ENCODE measurements at regions of chr19 and their contacts with region 1.

Region 1: DNA sequence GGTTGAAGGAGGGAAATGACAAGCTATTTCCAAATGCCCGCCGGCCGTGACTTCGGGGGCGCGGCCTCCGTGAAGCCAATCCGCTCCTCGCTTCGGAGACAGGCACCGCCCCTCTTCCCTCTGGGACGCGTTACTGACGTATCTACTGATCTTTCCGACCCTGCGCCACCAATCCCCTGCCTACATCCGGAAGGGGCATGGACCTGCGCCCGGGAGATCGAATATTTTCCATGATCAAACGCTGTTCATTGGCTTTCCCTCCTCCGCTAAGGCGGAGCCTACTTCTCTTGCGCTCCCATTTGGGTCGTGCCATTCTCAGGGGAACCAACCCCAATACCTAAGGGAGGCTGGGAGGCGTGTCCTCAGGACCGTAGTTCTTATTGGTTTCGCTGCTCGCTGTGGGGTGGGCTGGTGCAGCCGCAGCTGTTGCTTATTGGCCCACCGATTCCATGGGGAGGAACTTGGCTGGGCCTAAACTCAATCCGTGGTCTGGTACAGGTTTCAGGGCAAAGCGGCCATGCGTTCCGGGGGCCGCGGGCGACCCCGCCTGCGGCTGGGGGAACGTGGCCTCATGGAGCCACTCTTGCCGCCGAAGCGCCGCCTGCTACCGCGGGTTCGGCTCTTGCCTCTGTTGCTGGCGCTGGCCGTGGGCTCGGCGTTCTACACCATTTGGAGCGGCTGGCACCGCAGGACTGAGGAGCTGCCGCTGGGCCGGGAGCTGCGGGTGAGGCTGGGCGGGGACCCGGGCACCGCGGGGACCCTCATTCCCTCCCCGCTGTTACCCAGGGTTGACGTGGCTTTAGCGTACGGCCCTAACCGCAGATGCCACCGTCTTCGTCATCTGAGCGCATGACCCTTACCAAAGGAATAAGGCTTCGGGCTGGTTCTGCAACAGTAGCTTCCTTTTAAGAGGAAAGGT is at the start of gene QPCTL:
- DNase-seq: peak; percentile 98 to 99 (median 98)
- H3K4me3 ChIP-seq: peak within 1 kb of the TSS; percentile 70 to 94
- H3K4me3 Mint-ChIP-seq: peak within 1 kb of the TSS; percentile 90 to 100 (median 94)
- H3K27ac ChIP-seq: peak within 1 kb of the TSS; percentile 88
- H3K27ac Mint-ChIP-seq: peak within 1 kb of the TSS; percentile 91 to 100 (median 97)
- H3K4me1 ChIP-seq: peaks cover 17% of the 10 kb centered on the region
- H3K4me1 Mint-ChIP-seq: peaks cover 11 to 35% (median 17%) of the 10 kb centered on the region in 4 donors
- H3K27me3 ChIP-seq: no peaks in the 10 kb centered on the region
- H3K27me3 Mint-ChIP-seq: no peaks in the 10 kb centered on the region
- total RNA-seq, gene QPCTL: 10.8 to 11.4 TPM

Region 2: DNA sequence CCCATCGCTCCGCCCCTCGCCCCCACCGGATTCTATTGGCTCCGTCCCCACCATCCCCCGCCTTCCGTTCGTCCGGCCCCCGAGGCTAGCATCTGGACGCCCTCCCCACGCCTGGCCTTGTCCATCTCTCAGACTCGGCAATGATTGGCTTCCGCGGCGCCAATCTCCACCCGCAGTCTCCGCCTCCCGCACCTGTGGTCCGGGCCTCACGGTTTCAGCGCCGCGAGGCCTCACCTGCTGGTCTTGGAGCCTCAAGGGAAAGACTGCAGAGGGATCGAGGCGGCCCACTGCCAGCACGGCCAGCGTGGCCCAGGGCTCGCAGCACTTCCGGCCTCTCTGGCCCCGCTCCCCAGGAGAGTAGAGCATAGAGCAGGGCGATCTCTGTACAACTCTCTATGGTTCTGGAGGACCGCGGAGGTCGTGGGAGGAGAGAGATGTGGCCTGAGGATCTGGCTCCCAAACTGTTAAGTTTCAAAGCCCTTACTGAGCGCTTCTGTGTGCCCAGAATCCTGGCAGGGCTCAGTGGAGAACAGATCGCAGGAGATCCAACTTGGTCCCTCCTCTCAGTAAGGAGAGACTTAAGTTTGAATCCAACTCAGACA is 268.8 kb before region 1 on chr19 and contains the start of gene ERCC1:
- CTCF ChIA-PET with region 1: no interaction called
- POLR2A ChIA-PET with region 1: no interaction called
- intact Hi-C with region 1: loop called (anchors 10 kb)
- DNase-seq: peak in 4 of 5 donors; percentile 67 to 87 (median 71)
- H3K4me3 ChIP-seq: peak within 1 kb of the TSS; percentile 54 to 74
- H3K4me3 Mint-ChIP-seq: peak within 1 kb of the TSS; percentile 91 to 97 (median 94)
- H3K27ac ChIP-seq: peak within 1 kb of the TSS; percentile 68
- H3K27ac Mint-ChIP-seq: peak within 1 kb of the TSS; percentile 89 to 97 (median 94)
- H3K4me1 ChIP-seq: peaks cover 36% of the 10 kb centered on the region
- H3K4me1 Mint-ChIP-seq: peaks cover 28 to 58% (median 41%) of the 10 kb centered on the region in 4 donors
- H3K27me3 ChIP-seq: no peaks in the 10 kb centered on the region
- H3K27me3 Mint-ChIP-seq: peaks cover 0 to 2% of the 10 kb centered on the region in 2 donors
- total RNA-seq, gene ERCC1: 46.6 to 46.9 TPM

Region 3: DNA sequence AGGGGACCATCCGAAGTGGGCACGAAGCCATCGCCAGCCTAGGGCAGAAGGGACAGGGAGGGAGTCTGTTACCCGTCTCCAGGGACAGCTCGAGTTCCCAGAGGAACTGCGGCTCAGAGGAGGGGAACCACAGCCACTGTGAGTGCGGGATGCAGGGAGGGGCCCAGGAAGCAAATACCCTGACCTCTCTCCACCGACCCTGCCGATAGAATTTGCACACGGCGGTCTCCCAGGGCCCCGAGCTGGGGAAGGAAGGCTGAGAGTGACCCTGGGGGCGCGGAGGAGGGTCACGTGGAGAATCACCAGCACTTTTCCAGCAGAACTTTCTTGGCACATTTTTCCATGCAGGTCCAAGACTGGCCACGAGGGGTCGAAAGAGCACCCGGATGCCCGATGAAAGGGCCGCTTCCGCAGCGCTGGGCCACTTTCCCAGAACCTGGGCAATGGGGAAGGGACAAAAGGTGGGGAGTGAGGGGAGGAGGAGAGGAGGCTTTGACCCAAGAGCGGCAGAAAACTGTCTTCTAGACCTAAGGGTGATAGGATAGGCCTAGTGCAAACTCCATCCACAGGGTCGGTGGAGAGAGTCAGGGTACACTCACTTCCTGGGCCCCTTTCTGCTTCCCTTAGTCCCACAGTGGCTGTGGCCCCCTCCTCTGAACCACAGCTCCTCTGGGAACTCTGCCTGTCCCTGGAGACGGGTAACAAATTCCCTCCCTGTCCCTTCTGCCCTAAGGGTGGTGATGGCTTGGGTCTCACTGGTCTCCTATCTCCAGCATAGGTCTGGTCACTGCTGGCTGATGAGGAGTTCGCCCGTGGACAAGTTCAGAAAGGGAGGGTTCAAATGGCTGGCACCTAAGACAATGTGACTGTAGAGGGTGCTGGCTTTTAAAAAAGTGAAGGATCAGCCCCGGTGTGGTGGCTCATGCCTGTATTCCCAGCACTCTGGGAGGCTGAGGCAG is 85.1 kb before region 1 on chr19:
- CTCF ChIA-PET with region 1: no interaction called
- POLR2A ChIA-PET with region 1: no interaction called
- intact Hi-C with region 1: no loop called
- DNase-seq: peak in 4 of 5 donors; percentile 14 to 36 (median 20)
- H3K4me3 ChIP-seq: no peak overlapping the region
- H3K4me3 Mint-ChIP-seq: peak overlapping the region in 3 of 8 donors; percentile 44 to 65 (median 54)
- H3K27ac ChIP-seq: no peak overlapping the region
- H3K27ac Mint-ChIP-seq: peak overlapping the region in 4 of 7 donors; percentile 4 to 89 (median 42)
- H3K4me1 ChIP-seq: peaks cover 9% of the 10 kb centered on the region
- H3K4me1 Mint-ChIP-seq: peaks cover 5 to 11% (median 8%) of the 10 kb centered on the region in 4 donors
- H3K27me3 ChIP-seq: peaks cover 2% of the 10 kb centered on the region
- H3K27me3 Mint-ChIP-seq: peaks cover 7 to 9% of the 10 kb centered on the region in 2 donors

Region 4: GRCh38 chr19:45730389-45731288 is 38.2 kb after region 1 on chr19 and contains the start of gene FBXO46:
- CTCF ChIA-PET with region 1: interaction called, 14 read pairs
- POLR2A ChIA-PET with region 1: interaction called, 11 read pairs
- intact Hi-C with region 1: loop called (anchors 1 kb)
- DNase-seq: peak; percentile 90 to 97 (median 92)
- H3K4me3 ChIP-seq: peak within 1 kb of the TSS; percentile 68 to 97
- H3K4me3 Mint-ChIP-seq: peak within 1 kb of the TSS; percentile 89 to 100 (median 93)
- H3K27ac ChIP-seq: peak within 1 kb of the TSS; percentile 89
- H3K27ac Mint-ChIP-seq: peak within 1 kb of the TSS; percentile 83 to 96 (median 94)
- H3K4me1 ChIP-seq: peaks cover 35% of the 10 kb centered on the region
- H3K4me1 Mint-ChIP-seq: peaks cover 16 to 51% (median 30%) of the 10 kb centered on the region in 4 donors
- H3K27me3 ChIP-seq: no peaks in the 10 kb centered on the region
- H3K27me3 Mint-ChIP-seq: no peaks in the 10 kb centered on the region
- total RNA-seq, gene FBXO46: 33.1 to 37.3 TPM

Region 5: GRCh38 chr19:46040952-46041500 is 348.6 kb after region 1 on chr19 and contains the start of gene IGFL4:
- CTCF ChIA-PET with region 1: no interaction called
- POLR2A ChIA-PET with region 1: no interaction called
- intact Hi-C with region 1: no loop called
- DNase-seq: no peak
- H3K4me3 ChIP-seq: no peak within 1 kb of the TSS
- H3K4me3 Mint-ChIP-seq: no peak within 1 kb of the TSS
- H3K27ac ChIP-seq: no peak within 1 kb of the TSS
- H3K27ac Mint-ChIP-seq: no peak within 1 kb of the TSS
- H3K4me1 ChIP-seq: no peaks in the 10 kb centered on the region
- H3K4me1 Mint-ChIP-seq: no peaks in the 10 kb centered on the region
- H3K27me3 ChIP-seq: peaks cover 21% of the 10 kb centered on the region
- H3K27me3 Mint-ChIP-seq: peaks cover 37 to 40% of the 10 kb centered on the region in 2 donors
- total RNA-seq, gene IGFL4: not detected

Measured in CD4-positive, alpha-beta memory T cell (primary cell).